ENCODE measurements at regions of chr7 and their contacts with region 1.

Region 1: DNA sequence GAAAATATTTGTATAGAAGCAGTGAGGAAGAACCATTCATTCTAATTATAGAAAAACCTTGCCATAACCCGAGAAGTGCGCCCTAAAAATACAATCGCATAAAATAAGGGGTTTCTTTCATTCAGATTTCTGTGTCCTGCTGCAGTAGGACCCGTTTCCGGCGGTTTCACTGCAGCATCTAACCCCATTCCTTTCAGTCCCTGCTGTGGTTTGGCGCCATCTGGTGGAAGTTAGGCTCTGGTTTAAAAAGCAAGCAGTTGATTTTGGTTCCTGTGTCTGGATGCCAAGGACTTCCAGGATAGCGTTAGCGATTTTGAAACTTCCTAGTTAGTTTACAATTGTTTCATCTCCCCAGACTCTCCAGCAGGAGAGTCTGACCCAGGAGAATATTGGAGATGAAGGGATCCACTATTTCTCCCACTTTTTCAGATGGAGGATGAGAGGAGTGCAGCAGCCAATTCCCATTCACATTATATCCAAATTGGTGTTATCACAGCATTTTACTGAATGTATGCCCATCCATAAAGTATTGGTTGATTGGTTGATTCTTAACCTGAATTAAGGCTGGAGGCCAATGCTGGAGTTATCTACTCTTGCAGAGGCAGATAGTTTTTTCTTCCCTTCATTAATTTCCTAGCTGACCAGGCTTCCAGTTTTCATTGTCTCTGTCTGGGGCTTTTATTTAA is 128.8 kb upstream of the CACNA2D1 start:
- DNase-seq: peak; percentile 68 to 92 (median 86)
- H3K4me3 ChIP-seq: peak overlapping the region in 43 of 59 donors; percentile 2 to 50 (median 30)
- H3K27ac ChIP-seq: peak overlapping the region in 7 of 59 donors; percentile 5 to 70 (median 32)
- H3K27me3 ChIP-seq: no peaks in the 10 kb centered on the region
- CTCF ChIP-seq: peak; percentile 85 to 100 (median 94)

Region 2: DNA sequence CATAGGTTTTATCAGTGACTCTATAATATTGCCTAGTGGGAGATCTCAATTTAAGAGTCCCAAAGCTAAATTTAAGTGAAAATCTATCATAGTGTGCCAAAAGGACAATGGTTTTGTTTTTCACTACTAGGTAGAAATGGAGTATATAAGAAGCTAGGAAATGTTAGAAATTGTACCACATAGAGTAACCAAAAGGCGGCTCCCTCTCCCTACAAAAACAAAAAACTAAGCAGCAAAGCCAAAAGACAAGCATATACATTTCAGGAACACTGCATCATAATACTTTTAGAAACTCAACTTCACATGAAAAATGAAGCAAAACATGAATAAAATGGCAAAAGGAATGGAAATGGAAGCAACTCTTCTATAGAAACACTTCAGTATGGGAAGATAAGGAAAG is 400.3 kb before region 1 on chr7:
- intact Hi-C with region 1: loop called in 1 of 2 experiments (anchors 2 kb)
- DNase-seq: no peak
- H3K4me3 ChIP-seq: no peak overlapping the region
- H3K27ac ChIP-seq: peak overlapping the region in 5 of 59 donors; percentile 12 to 65 (median 16)
- H3K27me3 ChIP-seq: no peaks in the 10 kb centered on the region
- CTCF ChIP-seq: peak in 21 of 56 donors; percentile 9 to 41 (median 20)

Region 3: DNA sequence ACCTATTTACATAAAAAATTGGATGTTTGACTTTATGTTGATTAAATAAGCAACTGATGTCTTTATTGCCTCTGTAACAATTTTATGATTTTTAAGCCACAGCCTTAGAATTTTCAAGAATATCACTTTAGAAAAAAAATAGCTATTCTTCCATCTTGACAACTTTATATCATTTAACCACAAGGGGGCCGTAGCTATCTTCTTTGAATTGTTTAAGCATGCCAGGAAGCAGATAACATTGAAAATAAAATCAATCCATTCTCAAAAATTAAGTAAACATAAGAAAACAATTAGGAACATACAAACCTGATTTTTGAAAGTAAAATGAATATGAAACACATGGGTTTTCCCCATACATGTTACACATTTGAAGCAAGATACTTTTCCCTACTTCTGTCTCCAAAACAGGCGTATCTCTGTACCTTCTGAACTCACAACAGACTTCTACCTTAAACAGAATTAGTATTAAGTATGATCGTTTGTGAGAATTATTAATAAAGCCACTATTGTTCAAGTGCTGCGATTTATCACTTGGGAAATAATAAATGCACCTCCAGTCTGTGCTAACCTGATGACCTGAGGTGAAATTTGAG is 337.8 kb before region 1 on chr7:
- intact Hi-C with region 1: loop called (anchors 5 kb)
- DNase-seq: no peak
- H3K4me3 ChIP-seq: no peak overlapping the region
- H3K27ac ChIP-seq: peak overlapping the region in 1 of 59 donors; percentile 23
- H3K27me3 ChIP-seq: no peaks in the 10 kb centered on the region
- CTCF ChIP-seq: peak; percentile 56 to 92 (median 74)

Region 4: GRCh38 chr7:82481499-82482097 is 90.7 kb before region 1 on chr7:
- intact Hi-C with region 1: loop called in 1 of 2 experiments (anchors 10 kb)
- DNase-seq: no peak
- H3K4me3 ChIP-seq: no peak overlapping the region
- H3K27ac ChIP-seq: no peak overlapping the region
- H3K27me3 ChIP-seq: no peaks in the 10 kb centered on the region
- CTCF ChIP-seq: peak; percentile 72 to 97 (median 84)

Region 5: DNA sequence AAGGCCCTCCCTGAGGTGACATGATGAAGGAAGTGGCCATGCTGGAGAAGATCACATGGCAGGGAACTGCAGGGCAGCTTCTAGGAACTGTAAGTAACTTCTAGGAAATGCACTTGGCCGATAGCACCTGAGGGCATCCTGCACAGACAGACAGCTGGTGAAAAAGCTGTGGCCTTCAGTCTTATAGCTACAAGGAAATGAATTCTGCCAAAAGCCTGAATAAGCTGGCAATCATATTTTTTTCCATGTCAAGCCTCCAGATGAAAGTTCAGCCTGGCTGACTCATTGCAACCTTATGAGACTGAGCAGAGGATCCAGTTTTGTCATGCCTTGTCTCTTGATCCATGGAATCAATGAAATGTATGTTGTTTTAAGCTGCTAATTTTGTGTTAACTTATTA is 37.7 kb before region 1 on chr7:
- intact Hi-C with region 1: no loop called
- DNase-seq: no peak
- H3K4me3 ChIP-seq: no peak overlapping the region
- H3K27ac ChIP-seq: no peak overlapping the region
- H3K27me3 ChIP-seq: peaks cover 0 to 6% (median 0%) of the 10 kb centered on the region in 45 donors
- CTCF ChIP-seq: no peak